Lower leg skin (tissue), 4 donors: ENCODE measurements at regions of chr2 and their contacts with region 1.

Region 1: GRCh38 chr2:30229596-30229995 is 1.7 kb upstream of the LBH start:
- DNase-seq: peak in 1 of 2 donors; percentile 76
- H3K4me3 ChIP-seq: no peak overlapping the region
- CTCF ChIP-seq: no peak
- POLR2A ChIP-seq: no peak

Region 2: GRCh38 chr2:29351916-29352591 is 877.5 kb before region 1 on chr2:
- intact Hi-C with region 1: no loop called
- DNase-seq: no peak
- H3K4me3 ChIP-seq: no peak overlapping the region
- CTCF ChIP-seq: no peak
- POLR2A ChIP-seq: no peak

Region 3: GRCh38 chr2:30245364-30245763 is 15.8 kb after region 1 on chr2:
- intact Hi-C with region 1: loop called (anchors 2 kb)
- DNase-seq: no peak
- H3K4me3 ChIP-seq: no peak overlapping the region
- CTCF ChIP-seq: no peak
- POLR2A ChIP-seq: no peak

Region 4: GRCh38 chr2:30366199-30366691 is 136.6 kb after region 1 on chr2:
- intact Hi-C with region 1: no loop called
- DNase-seq: peak in 1 of 2 donors; percentile 62
- H3K4me3 ChIP-seq: no peak overlapping the region
- CTCF ChIP-seq: no peak
- POLR2A ChIP-seq: no peak